HepG2 (cell line): ENCODE measurements at regions of chrX and their contacts with region 1.

Region 1: GRCh38 chrX:87744391-87744790 is 226.8 kb downstream of the KLHL4 start:
- DNase-seq: no peak
- ATAC-seq: no peak
- H3K4me3 ChIP-seq: no peak overlapping the region
- H3K27ac ChIP-seq: no peak overlapping the region
- H3K4me1 ChIP-seq: no peaks in the 10 kb centered on the region
- H3K27me3 ChIP-seq: no peaks in the 10 kb centered on the region
- CTCF ChIP-seq: no peak
- EP300 ChIP-seq: no peak
- POLR2A ChIP-seq: no peak
- RAD21 ChIP-seq: no peak

Region 2: DNA sequence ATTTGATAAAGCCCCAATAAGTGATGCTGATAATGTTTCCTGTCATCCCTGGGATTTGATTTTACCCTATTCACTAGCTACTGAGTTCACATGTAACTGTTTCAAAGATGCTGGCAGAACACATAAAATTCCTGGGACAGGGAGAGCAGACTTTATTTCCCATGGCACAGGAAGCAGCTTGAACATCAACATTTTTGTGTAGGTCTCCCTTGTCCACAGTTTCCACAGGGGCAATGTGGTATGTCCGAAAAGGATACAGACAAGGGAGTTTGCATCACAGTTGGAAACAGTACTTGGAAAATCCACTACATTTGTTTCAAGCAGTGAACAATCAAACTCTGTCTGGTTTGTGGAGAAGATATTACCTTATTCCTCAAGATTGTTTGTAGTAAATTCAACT is 356.0 kb before region 1 on chrX:
- CTCF ChIA-PET with region 1: no interaction called
- POLR2A ChIA-PET with region 1: no interaction called
- in situ Hi-C with region 1: no loop called
- intact Hi-C with region 1: no loop called
- DNase-seq: no peak
- ATAC-seq: no peak
- H3K4me3 ChIP-seq: no peak overlapping the region
- H3K27ac ChIP-seq: no peak overlapping the region
- H3K4me1 ChIP-seq: no peaks in the 10 kb centered on the region
- H3K27me3 ChIP-seq: no peaks in the 10 kb centered on the region
- CTCF ChIP-seq: no peak
- EP300 ChIP-seq: no peak
- POLR2A ChIP-seq: no peak
- RAD21 ChIP-seq: no peak

Region 3: GRCh38 chrX:87693204-87693603 is 51.2 kb before region 1 on chrX:
- CTCF ChIA-PET with region 1: no interaction called
- POLR2A ChIA-PET with region 1: no interaction called
- in situ Hi-C with region 1: no loop called
- intact Hi-C with region 1: no loop called
- DNase-seq: no peak
- ATAC-seq: no peak
- H3K4me3 ChIP-seq: no peak overlapping the region
- H3K27ac ChIP-seq: no peak overlapping the region
- H3K4me1 ChIP-seq: no peaks in the 10 kb centered on the region
- H3K27me3 ChIP-seq: no peaks in the 10 kb centered on the region
- CTCF ChIP-seq: no peak
- EP300 ChIP-seq: no peak
- POLR2A ChIP-seq: no peak
- RAD21 ChIP-seq: no peak

Region 4: DNA sequence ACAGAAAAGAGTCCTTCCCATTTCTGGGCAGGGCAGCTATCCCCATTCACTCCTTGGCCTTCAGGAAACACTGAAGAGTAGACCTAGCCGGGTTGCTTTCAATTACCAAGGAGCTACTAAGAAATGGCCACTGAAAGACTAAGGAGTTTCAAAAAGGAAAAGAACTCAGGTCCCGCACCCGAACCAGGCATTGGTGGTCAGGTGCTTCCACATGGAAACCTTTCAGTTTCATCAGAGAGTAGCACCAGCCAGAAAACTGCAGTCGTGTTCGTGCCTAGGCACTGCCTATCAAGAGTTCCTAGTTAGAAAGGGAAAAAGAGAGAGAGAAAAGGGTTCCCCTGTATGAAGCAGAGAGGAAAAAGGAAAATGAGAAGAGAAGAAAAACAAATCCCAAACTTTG is 11.1 kb after region 1 on chrX:
- CTCF ChIA-PET with region 1: no interaction called
- POLR2A ChIA-PET with region 1: no interaction called
- in situ Hi-C with region 1: no loop called
- intact Hi-C with region 1: loop called (anchors 1 kb)
- DNase-seq: no peak
- ATAC-seq: no peak
- H3K4me3 ChIP-seq: no peak overlapping the region
- H3K27ac ChIP-seq: no peak overlapping the region
- H3K4me1 ChIP-seq: no peaks in the 10 kb centered on the region
- H3K27me3 ChIP-seq: no peaks in the 10 kb centered on the region
- CTCF ChIP-seq: no peak
- EP300 ChIP-seq: no peak
- POLR2A ChIP-seq: no peak
- RAD21 ChIP-seq: no peak